ENCODE measurements at regions of chr6 and their contacts with region 1.

Region 1: DNA sequence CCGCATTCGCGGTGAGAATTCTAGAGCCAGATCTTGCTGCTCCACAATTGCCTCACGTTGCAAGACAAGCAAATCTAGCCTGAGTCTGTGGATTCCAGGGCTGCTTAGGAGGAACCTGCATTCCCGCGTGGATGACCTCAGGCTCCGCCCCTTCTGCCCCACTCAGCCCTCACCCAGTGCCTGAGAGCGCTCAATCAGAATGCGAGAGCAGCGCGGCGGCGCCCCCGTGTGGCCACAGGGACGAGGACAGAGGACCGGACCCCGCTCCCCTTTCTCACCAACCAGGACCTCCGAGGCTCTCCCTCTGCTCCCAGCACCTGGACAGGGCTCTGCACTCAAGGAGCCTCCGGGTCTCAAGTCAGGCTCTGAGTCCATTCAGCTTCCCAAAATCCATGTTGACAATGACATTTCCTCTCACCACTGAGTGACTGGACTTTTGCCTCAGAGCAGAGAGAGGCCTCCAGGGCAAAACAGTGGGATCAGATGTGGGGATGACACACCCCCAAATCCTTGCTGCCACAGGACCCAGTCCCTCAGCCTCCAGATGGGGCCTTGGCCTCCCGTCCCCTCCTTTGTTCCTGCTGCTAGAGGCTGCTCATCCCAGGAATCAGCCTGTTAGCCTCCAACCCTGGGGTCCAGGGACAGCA is 52.0 kb downstream of the RPP21 start:
- DNase-seq: peak; percentile 72 to 77 (median 75)
- H3K4me3 ChIP-seq: no peak overlapping the region
- H3K4me3 Mint-ChIP-seq: no peak overlapping the region
- H3K27ac ChIP-seq: no peak overlapping the region
- H3K27ac Mint-ChIP-seq: no peak overlapping the region
- H3K4me1 ChIP-seq: no peaks in the 10 kb centered on the region
- H3K4me1 Mint-ChIP-seq: peaks cover 0 to 5% (median 0%) of the 10 kb centered on the region in 4 donors
- H3K27me3 ChIP-seq: no peaks in the 10 kb centered on the region
- H3K27me3 Mint-ChIP-seq: peaks cover 11 to 26% of the 10 kb centered on the region in 2 donors

Region 2: GRCh38 chr6:30091577-30092381 is 305.2 kb before region 1 on chr6:
- CTCF ChIA-PET with region 1: no interaction called
- POLR2A ChIA-PET with region 1: no interaction called
- intact Hi-C with region 1: no loop called
- DNase-seq: no peak
- H3K4me3 ChIP-seq: no peak overlapping the region
- H3K4me3 Mint-ChIP-seq: no peak overlapping the region
- H3K27ac ChIP-seq: no peak overlapping the region
- H3K27ac Mint-ChIP-seq: no peak overlapping the region
- H3K4me1 ChIP-seq: no peaks in the 10 kb centered on the region
- H3K4me1 Mint-ChIP-seq: no peaks in the 10 kb centered on the region
- H3K27me3 ChIP-seq: peaks cover 31% of the 10 kb centered on the region
- H3K27me3 Mint-ChIP-seq: peaks cover 44 to 46% of the 10 kb centered on the region in 2 donors

Region 3: DNA sequence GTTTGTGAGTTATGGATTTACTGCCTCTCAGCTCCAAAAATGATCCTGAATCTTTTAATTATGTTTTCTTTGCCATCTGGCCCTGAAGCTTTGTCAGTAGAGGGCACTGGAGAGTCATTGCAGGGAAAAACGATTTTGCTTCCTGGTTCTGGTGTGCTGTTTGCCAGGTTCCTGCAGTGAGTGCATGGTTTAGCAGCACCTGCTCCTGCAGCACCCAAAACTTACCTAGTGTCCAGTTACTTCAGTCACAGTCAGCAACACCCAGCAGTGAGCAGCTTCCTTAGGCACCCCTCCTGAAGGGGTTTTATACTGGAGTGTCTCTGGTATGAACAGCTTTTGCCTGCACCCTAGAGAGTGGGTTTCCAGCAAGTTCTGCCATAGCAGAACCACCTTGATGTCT is 177.7 kb before region 1 on chr6:
- CTCF ChIA-PET with region 1: interaction called, 31 read pairs
- POLR2A ChIA-PET with region 1: interaction called, 4 read pairs
- intact Hi-C with region 1: loop called (anchors 1 kb)
- DNase-seq: peak; percentile 50 to 68 (median 55)
- H3K4me3 ChIP-seq: no peak overlapping the region
- H3K4me3 Mint-ChIP-seq: no peak overlapping the region
- H3K27ac ChIP-seq: no peak overlapping the region
- H3K27ac Mint-ChIP-seq: peak overlapping the region in 3 of 7 donors; percentile 62 to 73 (median 72)
- H3K4me1 ChIP-seq: peaks cover 9% of the 10 kb centered on the region
- H3K4me1 Mint-ChIP-seq: peaks cover 15 to 23% (median 17%) of the 10 kb centered on the region in 4 donors
- H3K27me3 ChIP-seq: no peaks in the 10 kb centered on the region
- H3K27me3 Mint-ChIP-seq: no peaks in the 10 kb centered on the region

Region 4: GRCh38 chr6:30238174-30238795 is 158.7 kb before region 1 on chr6:
- CTCF ChIA-PET with region 1: interaction called, 9 read pairs
- POLR2A ChIA-PET with region 1: no interaction called
- intact Hi-C with region 1: loop called (anchors 1 kb)
- DNase-seq: peak in 4 of 5 donors; percentile 16 to 32 (median 24)
- H3K4me3 ChIP-seq: no peak overlapping the region
- H3K4me3 Mint-ChIP-seq: no peak overlapping the region
- H3K27ac ChIP-seq: no peak overlapping the region
- H3K27ac Mint-ChIP-seq: no peak overlapping the region
- H3K4me1 ChIP-seq: no peaks in the 10 kb centered on the region
- H3K4me1 Mint-ChIP-seq: peaks cover 0 to 3% (median 0%) of the 10 kb centered on the region in 4 donors
- H3K27me3 ChIP-seq: no peaks in the 10 kb centered on the region
- H3K27me3 Mint-ChIP-seq: peaks cover 13 to 18% of the 10 kb centered on the region in 2 donors

Region 5: DNA sequence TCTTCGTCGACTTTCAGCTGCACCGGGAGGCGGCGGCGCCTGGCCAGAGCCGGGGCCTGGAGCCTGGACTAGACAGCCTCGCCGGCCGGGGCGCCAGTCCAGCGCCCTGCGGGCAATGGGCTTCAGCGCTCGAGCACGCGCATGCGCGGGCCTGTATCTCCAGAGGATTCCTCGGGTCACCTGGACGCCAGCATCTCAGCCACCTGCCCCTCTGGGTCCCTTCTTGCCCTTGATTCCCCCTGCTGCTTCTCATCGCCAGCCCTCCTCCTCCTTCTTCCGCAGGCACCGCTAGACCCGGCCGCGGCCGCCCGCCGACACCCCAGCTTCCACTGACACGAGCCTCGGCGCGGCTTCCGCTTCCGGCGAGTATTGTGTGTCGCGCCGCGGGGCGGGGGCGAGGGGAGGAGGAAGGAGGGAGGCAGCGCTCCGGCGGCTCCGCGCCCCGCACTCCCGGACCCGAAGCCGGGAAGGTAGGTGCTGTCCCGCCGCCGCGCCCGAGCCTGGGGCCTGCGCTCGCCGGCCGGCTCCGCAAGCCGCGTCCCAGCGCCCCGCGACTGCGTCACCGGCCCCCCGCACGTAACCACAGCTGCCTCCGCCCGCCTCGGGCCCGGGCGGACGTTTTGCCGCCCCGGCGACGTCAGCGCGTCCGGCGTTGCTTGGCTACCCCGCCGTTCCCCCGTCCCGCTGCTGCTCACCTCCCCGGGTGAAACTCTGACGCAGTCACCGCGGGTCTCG is 70.3 kb before region 1 on chr6 and contains the start of gene TRIM39:
- CTCF ChIA-PET with region 1: no interaction called
- POLR2A ChIA-PET with region 1: no interaction called
- intact Hi-C with region 1: no loop called
- DNase-seq: peak; percentile 91 to 94 (median 92)
- H3K4me3 ChIP-seq: peak within 1 kb of the TSS; percentile 68 to 82
- H3K4me3 Mint-ChIP-seq: peak within 1 kb of the TSS; percentile 92 to 98 (median 94)
- H3K27ac ChIP-seq: peak within 1 kb of the TSS; percentile 99
- H3K27ac Mint-ChIP-seq: peak within 1 kb of the TSS; percentile 97 to 100 (median 100)
- H3K4me1 ChIP-seq: peaks cover 53% of the 10 kb centered on the region
- H3K4me1 Mint-ChIP-seq: peaks cover 41 to 69% (median 56%) of the 10 kb centered on the region in 4 donors
- H3K27me3 ChIP-seq: no peaks in the 10 kb centered on the region
- H3K27me3 Mint-ChIP-seq: no peaks in the 10 kb centered on the region
- total RNA-seq, gene TRIM39: 27.7 to 30.9 TPM

Region 6: DNA sequence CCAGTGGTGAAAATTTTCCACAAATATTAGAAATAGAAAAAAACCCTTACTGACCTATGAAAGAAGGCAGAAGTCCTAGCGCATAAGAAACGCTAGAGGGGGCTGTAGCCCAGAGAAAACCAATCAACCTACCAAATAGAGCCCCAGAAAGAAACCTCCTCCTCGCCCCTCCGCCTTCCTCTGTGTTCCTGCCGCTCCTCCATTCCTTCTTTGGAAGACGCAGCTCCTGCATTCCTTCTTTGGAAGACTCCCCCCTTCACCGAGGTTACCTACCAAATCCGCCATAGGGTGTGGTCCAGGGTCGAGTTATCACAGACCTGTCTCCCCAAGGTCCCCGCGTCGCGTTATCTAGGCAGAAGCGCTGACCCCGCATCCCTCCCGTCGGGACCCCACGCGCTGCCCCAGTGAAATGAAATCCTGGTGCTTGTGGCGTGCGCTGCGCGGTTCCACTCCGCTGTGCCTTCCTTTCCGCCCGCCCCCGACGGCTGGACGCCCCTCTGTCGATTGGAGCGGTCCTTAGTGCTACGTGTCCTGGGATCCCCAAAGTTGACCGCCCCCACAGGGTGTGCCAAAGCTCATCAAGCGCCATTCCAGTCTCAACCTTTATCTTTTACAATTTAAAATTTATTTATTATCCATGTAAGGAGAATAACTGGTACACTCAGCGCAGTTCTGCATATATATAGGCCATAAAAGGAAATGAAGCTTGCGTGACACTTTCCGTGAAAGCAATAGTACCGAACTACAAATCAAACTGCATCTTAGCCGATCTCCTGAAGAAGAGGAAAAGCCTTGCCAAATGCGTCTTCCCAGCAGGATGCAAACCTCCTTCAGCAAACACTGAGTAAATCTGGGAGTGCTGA is 39.0 kb before region 1 on chr6:
- CTCF ChIA-PET with region 1: interaction called, 34 read pairs
- POLR2A ChIA-PET with region 1: interaction called, 3 read pairs
- intact Hi-C with region 1: loop called (anchors 1 kb)
- DNase-seq: peak; percentile 55 to 61 (median 60)
- H3K4me3 ChIP-seq: peak overlapping the region in 1 of 2 donors; percentile 42
- H3K4me3 Mint-ChIP-seq: peak overlapping the region; percentile 84 to 95 (median 88)
- H3K27ac ChIP-seq: no peak overlapping the region
- H3K27ac Mint-ChIP-seq: peak overlapping the region in 2 of 7 donors; percentile 59 to 64
- H3K4me1 ChIP-seq: peaks cover 8% of the 10 kb centered on the region
- H3K4me1 Mint-ChIP-seq: peaks cover 6 to 10% (median 7%) of the 10 kb centered on the region in 4 donors
- H3K27me3 ChIP-seq: peaks cover 23% of the 10 kb centered on the region
- H3K27me3 Mint-ChIP-seq: peaks cover 29 to 39% of the 10 kb centered on the region in 2 donors

Region 7: DNA sequence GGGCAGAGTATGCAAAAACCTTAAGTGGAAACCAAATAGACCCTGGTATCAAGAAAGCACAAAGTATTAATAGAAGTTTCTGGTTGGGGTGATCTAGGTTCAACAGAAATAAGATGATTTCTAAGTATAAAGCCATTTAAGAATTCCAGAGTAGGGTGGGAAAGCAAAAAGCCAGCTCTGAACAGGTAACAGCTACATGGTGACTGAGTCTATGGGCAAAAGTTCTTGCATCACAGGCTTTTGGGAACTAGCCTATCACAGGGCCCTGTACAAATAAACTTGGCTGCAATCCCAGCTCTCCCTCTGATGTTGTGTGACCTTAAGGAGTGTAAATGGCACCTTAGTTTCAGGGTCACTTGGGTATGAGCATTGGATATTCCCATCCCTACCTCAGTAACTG is 767.0 kb after region 1 on chr6:
- CTCF ChIA-PET with region 1: no interaction called
- POLR2A ChIA-PET with region 1: no interaction called
- intact Hi-C with region 1: no loop called
- DNase-seq: no peak
- H3K4me3 ChIP-seq: no peak overlapping the region
- H3K4me3 Mint-ChIP-seq: no peak overlapping the region
- H3K27ac ChIP-seq: no peak overlapping the region
- H3K27ac Mint-ChIP-seq: no peak overlapping the region
- H3K4me1 ChIP-seq: peaks cover 13% of the 10 kb centered on the region
- H3K4me1 Mint-ChIP-seq: peaks cover 10 to 13% (median 12%) of the 10 kb centered on the region in 4 donors
- H3K27me3 ChIP-seq: no peaks in the 10 kb centered on the region
- H3K27me3 Mint-ChIP-seq: no peaks in the 10 kb centered on the region